ENCODE measurements at regions of chr10 and their contacts with region 1.

Region 1: GRCh38 chr10:103069453-103070331 is 123.4 kb downstream of the NT5C2 start:
- DNase-seq: peak; percentile 65
- H3K4me3 ChIP-seq: no peak overlapping the region
- H3K27ac ChIP-seq: no peak overlapping the region
- H3K4me1 ChIP-seq: no peaks in the 10 kb centered on the region
- H3K27me3 ChIP-seq: no peaks in the 10 kb centered on the region

Region 2: GRCh38 chr10:102743588-102744373 is 325.9 kb before region 1 on chr10 and contains the start of gene WBP1L:
- in situ Hi-C with region 1: loop called (anchors 25 kb)
- DNase-seq: peak; percentile 99
- H3K4me3 ChIP-seq: peak within 1 kb of the TSS; percentile 88
- H3K27ac ChIP-seq: peak within 1 kb of the TSS; percentile 43
- H3K4me1 ChIP-seq: peaks cover 18% of the 10 kb centered on the region; the same call in 1 of the 2 replicates
- H3K27me3 ChIP-seq: no peaks in the 10 kb centered on the region
- total RNA-seq, gene WBP1L: 42.7 and 57.4 TPM in 2 replicates